GM12878 (cell line): ENCODE measurements at regions of chr4 and their contacts with region 1.

Region 1: GRCh38 chr4:38034986-38035882 is 75.0 kb downstream of the PTTG2 start:
- DNase-seq: no peak
- ATAC-seq: peak; percentile 74
- H3K4me3 ChIP-seq: no peak overlapping the region
- H3K27ac ChIP-seq: no peak overlapping the region
- H3K4me1 ChIP-seq: no peaks in the 10 kb centered on the region
- H3K27me3 ChIP-seq: no peaks in the 10 kb centered on the region
- CTCF ChIP-seq: peak; percentile 44 to 75 (median 64); a peak in 5 of 6 replicates
- EP300 ChIP-seq: no peak
- POLR2A ChIP-seq: no peak
- RAD21 ChIP-seq: peak; percentile 89

Region 2: GRCh38 chr4:37528166-37528885 is 506.9 kb before region 1 on chr4:
- CTCF ChIA-PET with region 1: no interaction called
- POLR2A ChIA-PET with region 1: no interaction called
- RAD21 ChIA-PET with region 1: no interaction called
- SMC1A ChIA-PET with region 1: no interaction called
- in situ Hi-C with region 1: no loop called
- intact Hi-C with region 1: no loop called
- DNase-seq: no peak
- ATAC-seq: peak; percentile 73
- H3K4me3 ChIP-seq: no peak overlapping the region
- H3K27ac ChIP-seq: no peak overlapping the region
- H3K4me1 ChIP-seq: no peaks in the 10 kb centered on the region
- H3K27me3 ChIP-seq: no peaks in the 10 kb centered on the region
- CTCF ChIP-seq: no peak
- EP300 ChIP-seq: no peak
- POLR2A ChIP-seq: no peak
- RAD21 ChIP-seq: no peak

Region 3: GRCh38 chr4:37812710-37813109 is 222.5 kb before region 1 on chr4:
- CTCF ChIA-PET with region 1: interaction called, 65 read pairs
- POLR2A ChIA-PET with region 1: no interaction called
- RAD21 ChIA-PET with region 1: no interaction called
- SMC1A ChIA-PET with region 1: interaction called, 103 read pairs
- in situ Hi-C with region 1: no loop called
- intact Hi-C with region 1: no loop called
- DNase-seq: no peak
- ATAC-seq: no peak
- H3K4me3 ChIP-seq: no peak overlapping the region
- H3K27ac ChIP-seq: no peak overlapping the region
- H3K4me1 ChIP-seq: no peaks in the 10 kb centered on the region
- H3K27me3 ChIP-seq: no peaks in the 10 kb centered on the region
- CTCF ChIP-seq: no peak
- EP300 ChIP-seq: no peak
- POLR2A ChIP-seq: no peak
- RAD21 ChIP-seq: no peak

Region 4: GRCh38 chr4:38060829-38061431 is 25.7 kb after region 1 on chr4:
- CTCF ChIA-PET with region 1: no interaction called
- POLR2A ChIA-PET with region 1: no interaction called
- RAD21 ChIA-PET with region 1: no interaction called
- SMC1A ChIA-PET with region 1: no interaction called
- in situ Hi-C with region 1: no loop called
- intact Hi-C with region 1: no loop called
- DNase-seq: no peak
- ATAC-seq: no peak
- H3K4me3 ChIP-seq: no peak overlapping the region
- H3K27ac ChIP-seq: no peak overlapping the region
- H3K4me1 ChIP-seq: peaks cover 3% of the 10 kb centered on the region; the same call in 1 of the 2 replicates
- H3K27me3 ChIP-seq: no peaks in the 10 kb centered on the region
- CTCF ChIP-seq: no peak
- EP300 ChIP-seq: no peak
- POLR2A ChIP-seq: no peak
- RAD21 ChIP-seq: no peak

Region 5: GRCh38 chr4:38078590-38079421 is 43.6 kb after region 1 on chr4:
- CTCF ChIA-PET with region 1: no interaction called
- POLR2A ChIA-PET with region 1: no interaction called
- RAD21 ChIA-PET with region 1: no interaction called
- SMC1A ChIA-PET with region 1: no interaction called
- in situ Hi-C with region 1: no loop called
- intact Hi-C with region 1: no loop called
- DNase-seq: no peak
- ATAC-seq: peak; percentile 65
- H3K4me3 ChIP-seq: peak overlapping the region; percentile 7; the same call in 1 of the 2 replicates
- H3K27ac ChIP-seq: peak overlapping the region; percentile 87
- H3K4me1 ChIP-seq: peaks cover 47% of the 10 kb centered on the region
- H3K27me3 ChIP-seq: no peaks in the 10 kb centered on the region
- CTCF ChIP-seq: no peak
- EP300 ChIP-seq: no peak
- POLR2A ChIP-seq: no peak
- RAD21 ChIP-seq: no peak

Region 6: DNA sequence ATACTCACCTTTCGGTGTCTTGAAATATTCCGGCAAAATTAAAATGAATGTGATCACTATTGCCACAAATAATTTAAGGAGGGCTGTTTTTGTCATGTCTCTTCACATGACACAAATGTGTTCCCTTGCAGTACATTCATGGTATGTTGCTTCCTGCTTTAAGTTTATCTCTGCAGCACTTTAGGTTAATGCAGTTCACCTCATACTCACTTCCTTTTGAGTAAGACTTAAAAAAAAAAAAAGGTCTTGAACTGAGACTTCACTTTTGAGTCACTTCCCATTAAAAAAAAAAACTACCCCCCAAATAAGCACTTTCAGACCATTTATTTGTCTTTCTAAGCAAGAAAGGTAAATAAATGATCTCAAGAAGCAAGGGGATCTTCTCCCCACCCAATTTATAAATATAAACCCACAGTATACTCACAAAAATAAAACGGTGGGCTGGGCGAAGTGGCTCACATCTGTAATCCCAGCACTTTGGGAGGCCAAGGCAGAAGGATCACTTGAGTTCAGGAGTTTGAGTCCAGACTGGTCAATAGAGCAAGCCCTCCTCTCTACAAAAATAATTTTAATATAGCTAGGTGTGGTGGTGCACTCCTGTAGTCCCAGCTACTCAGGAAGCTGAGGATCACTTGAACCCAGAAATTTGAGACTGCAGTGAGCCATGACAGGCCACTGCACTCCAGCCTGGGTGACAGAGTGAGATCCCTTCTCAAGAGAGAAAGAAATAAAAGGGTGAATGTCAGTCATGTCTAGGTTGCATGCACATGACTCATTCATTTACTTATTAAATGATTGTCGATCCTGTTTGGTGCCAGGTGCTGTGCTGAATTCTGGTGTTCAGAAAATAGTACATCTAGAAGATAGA is 997.2 kb after region 1 on chr4 and contains the start of gene TMEM156:
- CTCF ChIA-PET with region 1: no interaction called
- POLR2A ChIA-PET with region 1: no interaction called
- RAD21 ChIA-PET with region 1: no interaction called
- SMC1A ChIA-PET with region 1: no interaction called
- in situ Hi-C with region 1: no loop called
- intact Hi-C with region 1: no loop called
- DNase-seq: peak; percentile 82
- ATAC-seq: peak; percentile 70
- H3K4me3 ChIP-seq: peak within 1 kb of the TSS; percentile 79
- H3K27ac ChIP-seq: peak within 1 kb of the TSS; percentile 88
- H3K4me1 ChIP-seq: peaks cover 28% of the 10 kb centered on the region
- H3K27me3 ChIP-seq: no peaks in the 10 kb centered on the region
- CTCF ChIP-seq: no peak
- EP300 ChIP-seq: peak; percentile 56 to 90; a peak in 2 of 4 replicates
- POLR2A ChIP-seq: peak; percentile 39; the same call in 1 of the 2 replicates
- RAD21 ChIP-seq: no peak
- polyA plus RNA-seq, gene TMEM156: 35.0 to 36.2 TPM